ENCODE measurements at regions of chr21 and their contacts with region 1.

Region 1: DNA sequence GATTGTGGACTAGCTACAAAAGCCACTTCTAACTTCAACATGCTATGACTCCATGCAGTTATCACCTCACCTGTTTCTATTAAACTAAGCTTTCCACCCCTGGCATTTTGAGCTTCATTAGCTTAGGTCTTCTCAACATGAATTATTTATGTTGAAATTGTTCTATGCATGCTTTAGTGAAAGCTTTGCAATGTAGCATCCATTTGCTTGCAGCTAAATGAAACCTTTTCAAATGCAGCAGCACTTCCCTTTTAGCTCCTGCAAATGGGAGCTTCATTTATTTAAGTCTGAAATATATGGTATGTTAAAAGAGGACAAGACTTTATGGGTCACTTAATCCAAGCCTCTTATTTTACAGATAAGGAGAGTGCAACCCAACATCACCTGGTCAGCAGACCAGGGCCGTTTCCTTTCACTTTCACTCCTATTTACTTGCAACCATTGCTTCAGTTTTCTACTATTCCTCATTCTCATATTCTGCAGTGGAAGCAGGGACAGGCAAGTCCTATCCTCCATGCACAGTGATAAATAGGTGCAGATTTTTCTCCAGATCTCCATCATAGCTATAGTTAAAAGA is 56.4 kb upstream of the SAMSN1 start:
- DNase-seq: no peak
- H3K4me3 ChIP-seq: no peak overlapping the region
- H3K27ac ChIP-seq: no peak overlapping the region
- H3K4me1 ChIP-seq: no peaks in the 10 kb centered on the region
- H3K27me3 ChIP-seq: no peaks in the 10 kb centered on the region
- CTCF ChIP-seq: no peak

Region 2: GRCh38 chr21:14401217-14401616 is 201.3 kb before region 1 on chr21:
- CTCF ChIA-PET with region 1: no interaction called
- POLR2A ChIA-PET with region 1: no interaction called
- intact Hi-C with region 1: no loop called
- DNase-seq: no peak
- H3K4me3 ChIP-seq: no peak overlapping the region
- H3K27ac ChIP-seq: no peak overlapping the region
- H3K4me1 ChIP-seq: no peaks in the 10 kb centered on the region
- H3K27me3 ChIP-seq: no peaks in the 10 kb centered on the region
- CTCF ChIP-seq: no peak

Region 3: GRCh38 chr21:14581902-14582457 is 20.5 kb before region 1 on chr21:
- CTCF ChIA-PET with region 1: no interaction called
- POLR2A ChIA-PET with region 1: interaction called, 10 read pairs
- intact Hi-C with region 1: no loop called
- DNase-seq: no peak
- H3K4me3 ChIP-seq: no peak overlapping the region
- H3K27ac ChIP-seq: no peak overlapping the region
- H3K4me1 ChIP-seq: no peaks in the 10 kb centered on the region
- H3K27me3 ChIP-seq: no peaks in the 10 kb centered on the region
- CTCF ChIP-seq: no peak

Measured in A673 (cell line).